ENCODE measurements at regions of chr12 and their contacts with region 1.

Region 1: GRCh38 chr12:128069359-128069997 is 197.5 kb upstream of the TMEM132C start:
- DNase-seq: peak; percentile 11
- H3K4me3 ChIP-seq: no peak overlapping the region
- H3K27ac ChIP-seq: no peak overlapping the region
- H3K4me1 ChIP-seq: no peaks in the 10 kb centered on the region
- H3K27me3 ChIP-seq: no peaks in the 10 kb centered on the region
- CTCF ChIP-seq: peak; percentile 39 to 53
- POLR2A ChIP-seq: no peak

Region 2: DNA sequence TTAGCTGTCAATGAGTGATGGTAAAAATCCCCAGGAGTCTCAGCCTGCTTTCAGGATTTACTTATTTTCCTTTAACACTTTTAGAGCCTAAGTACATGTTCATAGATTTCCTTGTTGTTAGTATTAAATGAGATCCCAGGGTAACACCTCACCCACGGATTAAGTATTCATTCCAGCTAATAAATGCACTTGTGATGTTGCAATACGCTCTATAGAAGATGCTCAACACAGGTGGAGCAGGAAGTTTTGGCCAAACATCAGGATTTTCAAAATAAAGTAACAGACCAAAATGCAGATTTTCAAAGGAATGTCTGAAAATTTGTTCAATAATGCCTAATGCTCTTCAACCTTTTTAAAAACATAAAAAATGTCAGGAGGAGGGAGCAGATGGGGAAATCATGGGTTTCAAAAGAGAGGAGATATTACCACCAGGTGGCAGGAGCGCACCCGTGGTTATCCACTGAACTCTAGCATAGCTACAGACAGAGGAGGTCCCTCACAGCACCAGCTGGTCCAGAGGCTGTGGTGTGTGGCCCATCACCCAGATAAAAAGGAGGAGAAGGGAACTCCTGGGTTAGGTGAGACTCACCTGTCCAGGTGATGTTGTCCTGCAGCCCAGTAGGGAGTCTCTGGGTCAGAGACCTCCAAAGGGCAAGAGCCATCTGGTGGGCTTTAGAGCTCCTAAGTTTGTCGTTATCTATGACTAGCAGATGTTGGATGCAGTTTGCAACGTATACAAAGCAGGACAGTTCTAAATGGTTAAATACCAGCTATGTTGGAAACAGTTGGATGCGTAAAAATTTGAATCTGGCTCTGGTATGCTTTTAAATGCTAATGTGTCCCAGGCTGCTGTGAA is 960.9 kb before region 1 on chr12:
- CTCF ChIA-PET with region 1: no interaction called
- POLR2A ChIA-PET with region 1: no interaction called
- dilution Hi-C with region 1: no loop called
- intact Hi-C with region 1: loop called (anchors 10 kb)
- DNase-seq: no peak
- H3K4me3 ChIP-seq: no peak overlapping the region
- H3K27ac ChIP-seq: no peak overlapping the region
- H3K4me1 ChIP-seq: no peaks in the 10 kb centered on the region
- H3K27me3 ChIP-seq: no peaks in the 10 kb centered on the region
- CTCF ChIP-seq: no peak
- POLR2A ChIP-seq: no peak

Region 3: DNA sequence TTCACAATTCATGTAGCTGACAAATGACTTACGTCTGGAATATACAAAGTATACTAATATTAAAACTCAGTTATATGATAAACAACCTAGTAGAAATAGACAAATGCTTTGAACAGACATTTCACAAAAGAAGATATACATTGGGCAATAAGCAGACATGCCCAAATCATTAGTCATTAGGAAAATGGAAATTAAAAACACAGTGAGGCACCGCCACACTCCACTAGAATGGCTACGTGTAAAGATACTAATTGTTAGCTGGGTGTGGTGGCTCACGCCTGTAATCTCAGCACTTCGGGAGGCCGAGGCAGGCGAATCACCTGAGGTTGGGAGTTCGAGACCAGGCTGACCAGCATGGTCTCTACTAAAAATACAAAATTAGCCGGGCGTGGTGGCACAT is 51.4 kb before region 1 on chr12:
- CTCF ChIA-PET with region 1: no interaction called
- POLR2A ChIA-PET with region 1: no interaction called
- dilution Hi-C with region 1: no loop called
- intact Hi-C with region 1: no loop called
- DNase-seq: no peak
- H3K4me3 ChIP-seq: no peak overlapping the region
- H3K27ac ChIP-seq: no peak overlapping the region
- H3K4me1 ChIP-seq: no peaks in the 10 kb centered on the region
- H3K27me3 ChIP-seq: no peaks in the 10 kb centered on the region
- CTCF ChIP-seq: no peak
- POLR2A ChIP-seq: no peak

Region 4: DNA sequence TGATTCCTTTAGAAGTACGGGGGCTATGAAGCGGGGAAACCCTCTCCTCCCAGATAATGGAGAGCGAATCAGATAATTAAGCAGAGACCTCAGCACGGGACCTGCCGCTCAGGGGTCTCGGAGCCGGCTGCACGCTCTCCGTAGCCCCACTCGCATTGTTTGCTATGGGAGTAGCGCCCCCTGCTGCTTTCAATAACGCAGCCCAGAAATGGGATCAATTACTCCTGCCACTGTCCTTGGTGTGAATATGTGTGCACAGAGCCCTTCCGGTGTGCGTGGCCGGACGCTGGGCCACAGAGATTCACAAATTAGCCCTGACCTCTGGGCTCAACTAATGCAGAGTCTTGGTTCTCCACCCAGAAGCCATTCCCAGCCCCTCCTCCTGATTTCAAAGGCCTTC is 121.1 kb after region 1 on chr12:
- CTCF ChIA-PET with region 1: no interaction called
- POLR2A ChIA-PET with region 1: no interaction called
- dilution Hi-C with region 1: no loop called
- intact Hi-C with region 1: no loop called
- DNase-seq: no peak
- H3K4me3 ChIP-seq: no peak overlapping the region
- H3K27ac ChIP-seq: no peak overlapping the region
- H3K4me1 ChIP-seq: no peaks in the 10 kb centered on the region
- H3K27me3 ChIP-seq: no peaks in the 10 kb centered on the region
- CTCF ChIP-seq: no peak
- POLR2A ChIP-seq: no peak

Measured in endothelial cell of umbilical vein (primary cell).